Right lobe of liver (tissue), 6 donors: ENCODE measurements at regions of chr1 and their contacts with region 1.

Region 1: GRCh38 chr1:53945433-53946251 is at the start of gene IFT25:
- DNase-seq: peak; percentile 98 to 99 (median 99)
- ATAC-seq: peak; percentile 89 to 94 (median 92)
- H3K4me3 ChIP-seq: peak within 1 kb of the TSS; percentile 74 to 91 (median 90)
- H3K27ac ChIP-seq: peak within 1 kb of the TSS; percentile 64 to 83 (median 77)
- H3K4me1 ChIP-seq: peaks cover 0 to 26% (median 0%) of the 10 kb centered on the region in 4 donors
- H3K27me3 ChIP-seq: no peaks in the 10 kb centered on the region
- CTCF ChIP-seq: no peak
- POLR2A ChIP-seq: peak; percentile 79
- total RNA-seq, gene IFT25: 11.7 to 19.3 (median 12.9) TPM

Region 2: GRCh38 chr1:53535846-53536245 is 409.8 kb before region 1 on chr1:
- intact Hi-C with region 1: no loop called
- DNase-seq: no peak
- ATAC-seq: no peak
- H3K4me3 ChIP-seq: no peak overlapping the region
- H3K27ac ChIP-seq: no peak overlapping the region
- H3K4me1 ChIP-seq: no peaks in the 10 kb centered on the region
- H3K27me3 ChIP-seq: no peaks in the 10 kb centered on the region
- CTCF ChIP-seq: no peak
- POLR2A ChIP-seq: no peak

Region 3: GRCh38 chr1:53878492-53879105 is 67.0 kb before region 1 on chr1:
- intact Hi-C with region 1: loop called in 1 of 2 experiments (anchors 5 kb)
- DNase-seq: no peak
- ATAC-seq: peak; percentile 49 to 76 (median 72)
- H3K4me3 ChIP-seq: no peak overlapping the region
- H3K27ac ChIP-seq: no peak overlapping the region
- H3K4me1 ChIP-seq: peaks cover 0 to 9% (median 3%) of the 10 kb centered on the region in 4 donors
- H3K27me3 ChIP-seq: no peaks in the 10 kb centered on the region
- CTCF ChIP-seq: peak; percentile 63 to 77 (median 68)
- POLR2A ChIP-seq: no peak

Region 4: GRCh38 chr1:53889304-53890298 is 56.0 kb before region 1 on chr1 and contains the start of gene YIPF1:
- intact Hi-C with region 1: loop called in 1 of 2 experiments (anchors 5 kb)
- DNase-seq: peak; percentile 93 to 95 (median 94)
- ATAC-seq: peak; percentile 90 to 95 (median 92)
- H3K4me3 ChIP-seq: peak within 1 kb of the TSS; percentile 68 to 99 (median 86)
- H3K27ac ChIP-seq: peak within 1 kb of the TSS; percentile 66 to 92 (median 73)
- H3K4me1 ChIP-seq: peaks cover 0 to 40% (median 13%) of the 10 kb centered on the region in 4 donors
- H3K27me3 ChIP-seq: no peaks in the 10 kb centered on the region
- CTCF ChIP-seq: no peak
- POLR2A ChIP-seq: peak; percentile 63
- total RNA-seq, gene YIPF1: 20.5 to 34.5 (median 25.4) TPM